ENCODE measurements at regions of chr1 and their contacts with region 1.

Region 1: GRCh38 chr1:32072622-32073298 is at the start of gene TMEM39B:
- DNase-seq: peak; percentile 93
- H3K4me3 ChIP-seq: peak within 1 kb of the TSS; percentile 96 to 100 (median 98)
- H3K27ac ChIP-seq: peak within 1 kb of the TSS; percentile 41
- H3K4me1 ChIP-seq: peaks cover 24% of the 10 kb centered on the region
- H3K27me3 ChIP-seq: no peaks in the 10 kb centered on the region
- CTCF ChIP-seq: no peak
- total RNA-seq, gene TMEM39B: 3.7 to 15.5 TPM

Region 2: DNA sequence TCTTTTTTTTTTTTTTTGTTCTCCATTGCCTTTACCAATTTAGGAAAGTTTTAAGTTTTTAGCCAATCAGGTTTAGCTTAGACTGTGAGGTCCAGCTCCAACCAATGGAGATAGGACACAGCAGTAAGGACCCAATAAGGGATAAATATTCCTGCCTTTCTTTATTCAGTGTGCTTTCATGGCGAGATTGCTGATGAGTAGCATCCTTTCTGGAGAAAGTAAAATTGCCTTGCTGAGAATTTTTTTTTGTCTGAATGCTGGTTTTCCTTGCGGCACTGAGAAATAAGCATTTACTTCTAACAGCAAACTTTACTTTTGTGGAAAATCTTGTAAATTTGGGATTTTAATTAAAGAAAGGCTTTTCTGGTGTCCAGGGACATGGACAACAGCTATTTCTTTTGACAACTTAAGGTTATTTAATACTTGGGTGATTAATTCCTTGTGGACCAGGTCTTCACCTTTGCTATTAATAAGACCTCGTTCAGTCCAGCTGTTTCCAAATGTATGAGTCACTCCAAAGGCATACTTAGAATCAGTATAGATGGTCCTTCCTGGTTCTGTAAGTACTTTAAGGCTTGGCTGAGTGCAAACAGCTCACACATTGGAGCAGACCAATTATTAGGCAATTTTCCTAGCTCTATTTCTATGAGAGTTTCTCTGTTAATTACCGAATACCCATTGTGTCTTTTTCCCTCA is 605.6 kb before region 1 on chr1:
- CTCF ChIA-PET with region 1: no interaction called
- dilution Hi-C with region 1: no loop called
- in situ Hi-C with region 1: no loop called
- intact Hi-C with region 1: no loop called
- DNase-seq: peak; percentile 38
- H3K4me3 ChIP-seq: no peak overlapping the region
- H3K27ac ChIP-seq: no peak overlapping the region
- H3K4me1 ChIP-seq: no peaks in the 10 kb centered on the region
- H3K27me3 ChIP-seq: no peaks in the 10 kb centered on the region
- CTCF ChIP-seq: no peak

Region 3: GRCh38 chr1:32005522-32005921 is 67.2 kb before region 1 on chr1:
- CTCF ChIA-PET with region 1: interaction called, 16 read pairs
- dilution Hi-C with region 1: no loop called
- in situ Hi-C with region 1: no loop called
- intact Hi-C with region 1: no loop called
- DNase-seq: no peak
- H3K4me3 ChIP-seq: no peak overlapping the region
- H3K27ac ChIP-seq: no peak overlapping the region
- H3K4me1 ChIP-seq: no peaks in the 10 kb centered on the region
- H3K27me3 ChIP-seq: no peaks in the 10 kb centered on the region
- CTCF ChIP-seq: no peak

Region 4: GRCh38 chr1:32040711-32041110 is 32.0 kb before region 1 on chr1:
- CTCF ChIA-PET with region 1: no interaction called
- dilution Hi-C with region 1: no loop called
- in situ Hi-C with region 1: no loop called
- intact Hi-C with region 1: no loop called
- DNase-seq: no peak
- H3K4me3 ChIP-seq: no peak overlapping the region
- H3K27ac ChIP-seq: no peak overlapping the region
- H3K4me1 ChIP-seq: no peaks in the 10 kb centered on the region
- H3K27me3 ChIP-seq: no peaks in the 10 kb centered on the region
- CTCF ChIP-seq: no peak

Region 5: DNA sequence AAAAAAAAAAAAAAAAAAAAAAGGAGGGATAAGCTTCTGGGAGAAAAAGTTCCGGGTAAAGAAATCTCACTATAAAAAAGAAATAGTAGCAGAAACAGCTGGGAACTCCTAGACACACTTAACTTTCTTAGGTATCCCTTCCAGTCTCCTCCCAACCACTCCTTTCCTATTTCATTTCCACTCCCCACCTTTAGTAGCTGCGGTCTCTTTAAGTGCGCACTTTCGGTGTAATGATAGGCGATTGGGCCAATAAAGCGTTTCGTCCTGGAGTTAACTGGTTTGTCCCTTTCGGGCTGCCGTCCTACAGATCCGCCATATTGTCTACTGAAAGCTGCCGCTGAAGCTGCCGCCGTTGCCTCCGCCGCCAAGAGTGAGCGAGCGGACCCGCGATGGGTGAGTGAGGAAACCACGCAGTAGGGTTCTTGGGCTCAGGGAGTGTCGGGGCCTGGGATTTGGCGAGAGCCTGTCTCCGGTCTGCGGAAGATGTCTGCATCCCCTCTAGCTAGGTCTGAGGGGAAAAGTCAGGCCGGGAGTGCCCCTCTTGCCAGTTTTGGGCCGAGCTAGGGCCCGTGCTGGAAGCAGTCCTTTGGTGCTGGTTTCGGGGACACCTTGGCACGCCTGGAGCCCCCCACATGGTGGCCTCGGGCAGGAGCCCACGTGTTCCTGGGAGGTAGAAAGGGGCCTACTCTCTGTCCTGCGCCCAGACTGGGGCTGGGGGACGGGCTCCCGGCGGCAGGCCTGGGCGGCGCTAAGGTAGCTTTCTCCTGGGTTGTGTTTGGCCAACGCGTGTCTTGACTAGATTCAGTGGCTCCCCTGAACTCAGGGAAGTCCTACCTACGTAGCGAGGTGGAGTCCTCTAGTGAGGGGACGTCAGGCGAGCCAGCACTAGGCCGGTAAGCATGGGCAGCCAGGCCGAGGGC is 35.2 kb after region 1 on chr1 and contains the start of gene KPNA6:
- CTCF ChIA-PET with region 1: interaction called, 6 read pairs
- dilution Hi-C with region 1: no loop called
- in situ Hi-C with region 1: no loop called
- intact Hi-C with region 1: loop called (anchors 2 kb)
- DNase-seq: peak; percentile 96
- H3K4me3 ChIP-seq: peak within 1 kb of the TSS; percentile 51 to 75 (median 75)
- H3K27ac ChIP-seq: peak within 1 kb of the TSS; percentile 77
- H3K4me1 ChIP-seq: no peaks in the 10 kb centered on the region
- H3K27me3 ChIP-seq: no peaks in the 10 kb centered on the region
- CTCF ChIP-seq: no peak
- total RNA-seq, gene KPNA6: 83.5 to 92.7 TPM

Region 6: DNA sequence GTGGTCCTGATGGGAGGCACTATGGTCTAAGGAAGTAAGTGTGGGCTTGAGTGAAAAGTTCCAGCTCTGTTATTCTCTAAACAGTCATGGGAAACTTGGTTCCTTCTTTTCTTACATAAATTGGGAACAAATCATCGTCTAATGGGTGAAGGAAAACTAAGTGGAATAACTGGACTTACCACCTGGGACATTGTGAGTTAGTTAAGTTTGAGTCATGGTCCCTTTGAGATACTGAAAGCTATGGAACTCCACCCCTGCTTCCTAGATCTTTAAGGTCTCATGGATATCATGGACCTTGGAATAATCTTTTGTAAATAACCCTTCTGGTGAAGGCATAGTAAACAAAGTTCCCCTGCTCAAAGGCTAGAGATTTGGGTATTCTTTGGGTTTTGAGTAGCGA is 90.6 kb after region 1 on chr1:
- CTCF ChIA-PET with region 1: no interaction called
- dilution Hi-C with region 1: loop called (anchors 5 kb)
- in situ Hi-C with region 1: no loop called
- intact Hi-C with region 1: no loop called
- DNase-seq: no peak
- H3K4me3 ChIP-seq: no peak overlapping the region
- H3K27ac ChIP-seq: no peak overlapping the region
- H3K4me1 ChIP-seq: no peaks in the 10 kb centered on the region
- H3K27me3 ChIP-seq: no peaks in the 10 kb centered on the region
- CTCF ChIP-seq: no peak